ENCODE measurements at regions of chr19 and their contacts with region 1.

Region 1: GRCh38 chr19:18058208-18059030 is 28.3 kb downstream of the IL12RB1 start:
- DNase-seq: peak; percentile 77 to 81 (median 80)
- ATAC-seq: peak; percentile 93
- H3K4me3 ChIP-seq: no peak overlapping the region
- H3K27ac ChIP-seq: peak overlapping the region; percentile 42 to 84 (median 78)
- H3K4me1 ChIP-seq: peaks cover 13% of the 10 kb centered on the region
- H3K27me3 ChIP-seq: no peaks in the 10 kb centered on the region
- CTCF ChIP-seq: peak; percentile 83 to 96 (median 95)
- POLR2A ChIP-seq: no peak

Region 2: DNA sequence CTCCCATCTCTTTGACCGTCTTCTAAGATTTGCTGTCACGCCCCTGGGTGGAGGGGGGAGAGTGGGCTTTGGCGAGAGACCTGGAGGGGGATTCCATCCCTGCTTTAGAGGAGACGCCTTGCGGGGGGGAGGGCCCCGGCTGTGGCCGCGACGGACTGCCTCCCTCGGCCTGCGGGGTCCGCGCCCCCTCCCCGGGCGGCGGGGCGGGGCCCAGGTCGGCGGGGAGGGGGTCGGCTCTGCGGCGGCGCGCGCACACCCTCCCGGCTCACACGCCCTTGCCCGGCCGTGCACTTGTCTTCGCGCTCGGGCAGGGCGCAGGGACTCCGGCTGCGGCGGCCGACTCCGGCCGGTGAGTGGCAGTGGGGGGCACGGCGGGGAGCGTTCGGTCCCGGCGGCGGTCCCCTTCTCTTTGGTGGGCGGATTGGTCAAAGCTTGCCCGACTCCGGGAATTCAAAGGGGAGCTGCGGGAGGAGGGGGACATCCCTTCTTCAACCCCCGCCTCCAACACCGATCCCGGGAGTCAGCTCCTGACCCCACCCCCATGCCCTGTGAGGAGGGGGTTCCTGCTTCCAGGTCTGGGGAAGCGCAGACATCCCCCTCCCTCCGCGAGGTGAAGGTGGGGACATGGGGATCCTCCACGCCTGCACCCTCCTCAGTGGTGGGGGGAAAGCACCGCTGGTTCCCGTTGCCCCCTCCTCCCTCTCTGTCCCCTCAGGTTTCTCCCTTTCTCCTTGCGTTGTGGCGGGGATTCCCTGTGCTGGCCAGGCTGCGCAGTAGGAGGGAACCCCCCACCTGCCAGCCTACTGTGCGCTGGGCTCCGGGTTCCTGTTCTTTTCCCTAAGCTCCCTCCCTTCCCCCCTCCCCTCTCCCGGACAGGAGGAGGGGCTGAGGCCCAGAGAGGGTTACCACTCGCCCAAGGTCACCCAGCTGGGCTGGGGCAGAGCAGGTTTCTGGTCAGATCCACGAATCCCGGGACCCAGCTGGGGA is 106.1 kb before region 1 on chr19:
- intact Hi-C with region 1: no loop called
- DNase-seq: no peak
- ATAC-seq: no peak
- H3K4me3 ChIP-seq: no peak overlapping the region
- H3K27ac ChIP-seq: no peak overlapping the region
- H3K4me1 ChIP-seq: peaks cover 47% of the 10 kb centered on the region
- H3K27me3 ChIP-seq: peaks cover 0 to 52% of the 10 kb centered on the region in 2 donors
- CTCF ChIP-seq: no peak
- POLR2A ChIP-seq: no peak

Region 3: GRCh38 chr19:18007917-18008673 is 50.3 kb before region 1 on chr19 and contains the start of gene ARRDC2:
- intact Hi-C with region 1: loop called (anchors 2 kb)
- DNase-seq: peak; percentile 87 to 94 (median 94)
- ATAC-seq: peak; percentile 92
- H3K4me3 ChIP-seq: no peak within 1 kb of the TSS
- H3K27ac ChIP-seq: peak within 1 kb of the TSS; percentile 60 to 85 (median 82)
- H3K4me1 ChIP-seq: peaks cover 24% of the 10 kb centered on the region
- H3K27me3 ChIP-seq: no peaks in the 10 kb centered on the region
- CTCF ChIP-seq: peak in 1 of 7 experiments; percentile 6
- POLR2A ChIP-seq: peak in 2 of 3 donors; percentile 32 to 43
- total RNA-seq, gene ARRDC2: 23.1 to 30.1 TPM

Measured in body of pancreas (tissue), 4 donors.